ENCODE measurements at regions of chr7 and their contacts with region 1.

Region 1: DNA sequence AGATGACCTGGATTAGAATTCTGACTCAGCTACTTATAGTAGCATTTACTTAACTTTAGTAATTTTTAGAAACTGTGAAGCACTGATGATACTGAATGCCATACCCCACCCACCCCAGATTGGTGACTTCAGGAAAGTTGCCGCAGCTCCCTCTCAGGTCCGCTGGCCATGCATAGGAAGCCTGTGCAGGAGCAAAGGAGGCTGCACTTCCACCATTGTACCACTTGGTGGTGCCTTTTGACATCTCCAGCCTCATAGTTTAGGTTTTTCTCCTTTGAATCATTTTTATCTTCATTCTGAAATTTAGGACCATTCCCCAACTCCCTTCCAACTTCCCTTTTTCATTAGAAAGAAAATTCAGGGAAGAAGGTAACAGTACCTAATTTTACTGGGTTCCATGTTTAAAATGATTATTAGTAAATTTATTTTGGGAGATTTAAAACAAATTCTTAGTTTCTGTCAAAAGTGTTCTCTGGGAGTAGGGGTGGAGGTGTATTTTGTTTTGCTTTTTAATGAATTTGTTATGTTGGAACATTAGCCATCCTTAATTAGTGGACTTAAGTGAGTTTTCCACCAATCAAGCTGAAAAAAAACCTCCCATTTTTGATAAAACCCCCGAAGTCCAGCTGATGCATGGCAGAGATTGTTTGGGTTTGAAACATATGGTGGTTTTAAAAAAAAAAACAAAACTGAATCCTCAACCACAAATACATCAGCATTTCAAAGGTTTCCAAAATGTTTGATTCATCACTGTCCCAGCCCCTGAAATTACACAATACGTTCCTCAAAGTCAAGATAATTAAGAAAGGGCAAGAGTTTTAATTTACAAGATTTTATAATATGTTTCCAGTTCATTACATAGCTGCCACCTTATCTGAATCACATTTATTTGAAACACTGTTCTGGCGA is 109.6 kb downstream of the WNT2 start:
- DNase-seq: peak in 7 of 9 experiments; percentile 9 to 53 (median 31)
- ATAC-seq: peak; percentile 57
- H3K4me3 ChIP-seq: no peak overlapping the region
- H3K4me3 Mint-ChIP-seq: no peak overlapping the region
- H3K27ac ChIP-seq: no peak overlapping the region
- H3K27ac Mint-ChIP-seq: no peak overlapping the region
- H3K4me1 ChIP-seq: no peaks in the 10 kb centered on the region
- H3K4me1 Mint-ChIP-seq: no peaks in the 10 kb centered on the region
- H3K27me3 ChIP-seq: no peaks in the 10 kb centered on the region
- H3K27me3 Mint-ChIP-seq: no peaks in the 10 kb centered on the region
- CTCF ChIP-seq: peak; percentile 89

Region 2: GRCh38 chr7:118153551-118154177 is 940.4 kb after region 1 on chr7:
- CTCF ChIA-PET with region 1: no interaction called
- POLR2A ChIA-PET with region 1: no interaction called
- intact Hi-C with region 1: loop called in 1 of 2 experiments (anchors 5 kb)
- DNase-seq: peak in 4 of 9 experiments; percentile 6 to 57 (median 30)
- ATAC-seq: peak; percentile 63
- H3K4me3 ChIP-seq: no peak overlapping the region
- H3K4me3 Mint-ChIP-seq: no peak overlapping the region
- H3K27ac ChIP-seq: no peak overlapping the region
- H3K27ac Mint-ChIP-seq: no peak overlapping the region
- H3K4me1 ChIP-seq: no peaks in the 10 kb centered on the region
- H3K4me1 Mint-ChIP-seq: no peaks in the 10 kb centered on the region
- H3K27me3 ChIP-seq: peaks cover 0 to 3% of the 10 kb centered on the region in 2 experiments
- H3K27me3 Mint-ChIP-seq: peaks cover 34% of the 10 kb centered on the region
- CTCF ChIP-seq: peak; percentile 84

Measured in CD8-positive, alpha-beta T cell (primary cell).